ENCODE measurements at regions of chr9 and their contacts with region 1.

Region 1: GRCh38 chr9:131423171-131423581 is 29.3 kb downstream of the PRRC2B start:
- DNase-seq: peak; percentile 94
- H3K4me3 Mint-ChIP-seq: peak overlapping the region; percentile 51
- H3K27ac Mint-ChIP-seq: peak overlapping the region; percentile 64
- H3K4me1 Mint-ChIP-seq: peaks cover 50% of the 10 kb centered on the region
- H3K27me3 Mint-ChIP-seq: no peaks in the 10 kb centered on the region
- CTCF ChIP-seq: no peak

Region 2: GRCh38 chr9:131407717-131408195 is 15.4 kb before region 1 on chr9:
- CTCF ChIA-PET with region 1: interaction called, 5 read pairs
- POLR2A ChIA-PET with region 1: interaction called, 13 read pairs
- intact Hi-C with region 1: no loop called
- DNase-seq: peak; percentile 67
- H3K4me3 Mint-ChIP-seq: peak overlapping the region; percentile 54
- H3K27ac Mint-ChIP-seq: peak overlapping the region; percentile 49
- H3K4me1 Mint-ChIP-seq: peaks cover 63% of the 10 kb centered on the region
- H3K27me3 Mint-ChIP-seq: no peaks in the 10 kb centered on the region
- CTCF ChIP-seq: peak; percentile 23

Region 3: GRCh38 chr9:131478421-131478868 is 55.3 kb after region 1 on chr9:
- CTCF ChIA-PET with region 1: no interaction called
- POLR2A ChIA-PET with region 1: no interaction called
- intact Hi-C with region 1: no loop called
- DNase-seq: peak; percentile 55
- H3K4me3 Mint-ChIP-seq: no peak overlapping the region
- H3K27ac Mint-ChIP-seq: no peak overlapping the region
- H3K4me1 Mint-ChIP-seq: no peaks in the 10 kb centered on the region
- H3K27me3 Mint-ChIP-seq: no peaks in the 10 kb centered on the region
- CTCF ChIP-seq: peak; percentile 48

Region 4: DNA sequence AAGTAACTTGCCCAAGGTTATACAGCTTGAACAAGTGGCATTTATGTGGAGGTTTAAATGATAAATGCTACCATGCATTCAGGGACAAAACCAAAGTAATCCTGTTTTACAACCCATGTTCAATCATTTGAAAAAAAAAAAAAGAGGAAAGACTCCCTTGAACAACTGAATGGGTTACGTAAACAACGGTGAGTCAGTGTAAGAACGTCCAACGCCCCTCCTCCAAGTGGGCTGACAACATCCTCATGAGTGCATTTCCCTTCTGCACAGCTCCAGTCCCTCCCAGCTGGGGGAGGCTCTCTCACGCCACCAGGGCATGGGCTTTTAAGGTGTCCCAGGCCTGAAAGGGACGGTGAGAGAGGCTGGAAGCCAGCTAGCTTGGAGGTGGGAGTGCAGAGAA is 212.1 kb after region 1 on chr9:
- CTCF ChIA-PET with region 1: no interaction called
- POLR2A ChIA-PET with region 1: no interaction called
- intact Hi-C with region 1: no loop called
- DNase-seq: peak; percentile 97
- H3K4me3 Mint-ChIP-seq: no peak overlapping the region
- H3K27ac Mint-ChIP-seq: peak overlapping the region; percentile 77
- H3K4me1 Mint-ChIP-seq: peaks cover 30% of the 10 kb centered on the region
- H3K27me3 Mint-ChIP-seq: no peaks in the 10 kb centered on the region
- CTCF ChIP-seq: no peak